ENCODE measurements at regions of chr17 and their contacts with region 1.

Region 1: DNA sequence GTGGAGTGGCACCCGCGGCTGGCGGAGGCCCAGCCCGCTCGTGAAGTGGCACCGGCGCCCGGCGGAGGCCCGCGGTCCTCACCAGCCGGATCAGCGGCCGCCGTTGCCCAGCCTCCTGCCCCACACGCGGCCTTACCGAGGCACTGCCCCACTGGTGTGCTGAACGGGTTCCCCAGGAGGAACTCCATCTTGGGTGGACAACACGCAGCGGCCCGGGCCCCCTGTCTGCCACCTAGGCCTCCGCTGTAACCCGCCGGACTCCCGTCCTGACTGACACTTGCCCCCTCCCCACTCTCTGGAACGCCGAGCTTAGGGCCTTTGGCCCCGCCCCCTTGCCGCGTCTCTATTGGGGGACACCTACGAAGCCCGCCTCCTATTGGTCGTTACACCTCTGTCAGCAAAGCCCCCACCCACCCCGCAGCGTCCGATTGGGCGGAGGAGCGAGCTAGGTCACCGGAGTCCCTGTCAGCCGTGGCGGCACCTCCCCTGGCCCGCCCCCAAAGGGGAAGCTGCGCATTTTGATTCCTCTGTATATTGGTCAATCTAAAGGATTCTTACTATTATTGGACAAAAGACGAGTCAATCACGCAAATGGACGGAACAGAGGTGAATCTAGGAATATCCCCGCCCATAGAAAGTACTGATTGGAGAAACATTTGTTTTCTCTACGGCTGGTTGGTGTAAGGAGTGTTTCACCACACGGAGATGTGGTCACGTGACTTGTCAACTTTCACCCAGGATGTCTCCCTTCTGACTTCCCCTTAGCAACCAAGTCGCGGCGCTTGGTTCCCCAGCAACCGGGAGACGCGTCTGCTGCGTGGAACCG is at the starts of genes DRC3 and TOM1L2:
- DNase-seq: peak; percentile 100
- H3K4me3 Mint-ChIP-seq: peak within 1 kb of the TSS; percentile 90
- H3K27ac Mint-ChIP-seq: peak within 1 kb of the TSS; percentile 75
- H3K4me1 Mint-ChIP-seq: peaks cover 35% of the 10 kb centered on the region
- H3K27me3 Mint-ChIP-seq: no peaks in the 10 kb centered on the region
- total RNA-seq, gene DRC3: 0.40 to 0.64 TPM
- total RNA-seq, gene TOM1L2: 9.8 to 9.9 TPM

Region 2: DNA sequence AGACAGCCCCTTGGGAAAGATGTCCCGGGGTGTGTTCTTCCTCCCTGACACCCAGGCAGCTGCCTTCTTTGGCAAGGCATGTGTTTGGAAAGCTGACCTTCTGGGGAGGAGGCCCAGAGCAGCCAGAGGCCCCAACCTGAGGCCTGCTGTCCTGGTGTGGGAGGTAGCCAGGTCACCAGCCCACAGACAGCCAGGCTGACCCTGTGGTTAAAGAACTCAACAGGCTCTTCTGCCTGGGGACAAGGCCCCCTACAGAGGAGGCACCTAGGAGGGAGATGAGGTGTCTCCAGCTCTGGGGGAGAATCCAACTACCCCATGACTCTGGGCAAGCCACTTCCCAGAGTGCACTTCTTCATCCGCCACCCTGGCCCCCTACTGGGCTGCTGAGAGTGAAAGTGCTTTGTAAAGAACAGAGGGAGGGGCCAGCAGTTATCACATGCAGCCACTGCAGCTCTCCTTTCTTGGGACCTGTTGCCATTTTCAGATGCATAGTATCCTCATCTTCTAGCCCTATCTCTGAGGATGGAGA is 122.4 kb before region 1 on chr17:
- CTCF ChIA-PET with region 1: no interaction called
- intact Hi-C with region 1: loop called (anchors 1 kb)
- DNase-seq: peak; percentile 94
- H3K4me3 Mint-ChIP-seq: peak overlapping the region; percentile 41
- H3K27ac Mint-ChIP-seq: peak overlapping the region; percentile 95
- H3K4me1 Mint-ChIP-seq: peaks cover 78% of the 10 kb centered on the region
- H3K27me3 Mint-ChIP-seq: no peaks in the 10 kb centered on the region

Region 3: GRCh38 chr17:17890773-17891759 is 81.3 kb before region 1 on chr17:
- CTCF ChIA-PET with region 1: no interaction called
- intact Hi-C with region 1: loop called (anchors 2 kb)
- DNase-seq: peak; percentile 75
- H3K4me3 Mint-ChIP-seq: no peak overlapping the region
- H3K27ac Mint-ChIP-seq: no peak overlapping the region
- H3K4me1 Mint-ChIP-seq: peaks cover 2% of the 10 kb centered on the region
- H3K27me3 Mint-ChIP-seq: no peaks in the 10 kb centered on the region

Region 4: DNA sequence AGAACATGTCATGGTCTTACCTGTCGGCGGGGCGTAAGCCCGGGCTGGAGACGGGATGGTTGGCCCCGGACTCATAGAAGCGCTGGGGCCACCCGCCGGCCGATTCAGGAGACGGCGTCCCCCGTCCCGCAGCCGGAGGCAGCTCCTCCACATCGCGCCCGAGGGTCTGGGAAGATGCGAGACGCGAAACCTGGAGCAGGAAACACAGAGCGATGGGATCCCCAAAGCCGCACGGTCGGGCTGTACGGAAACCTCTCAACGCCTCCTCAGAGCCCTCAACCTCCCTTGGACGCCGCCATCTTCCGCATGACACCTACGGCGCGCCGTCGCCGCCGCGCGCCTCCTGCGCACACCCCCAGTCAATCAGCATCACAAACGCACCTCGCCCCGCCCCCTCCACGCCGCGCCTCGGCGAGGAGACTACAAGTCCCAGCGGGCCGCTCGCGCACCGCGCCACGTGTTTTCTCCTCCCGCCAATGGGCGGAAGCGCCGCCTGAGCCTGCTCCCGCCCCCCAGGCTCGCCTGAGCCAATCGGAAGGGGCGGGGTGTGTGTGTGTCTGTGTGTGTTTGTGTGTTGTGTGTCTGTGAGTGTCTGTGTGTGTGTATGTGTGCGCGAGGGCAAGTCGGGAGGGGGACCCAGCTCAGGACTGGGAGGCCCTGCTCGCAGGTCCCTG is 66.7 kb after region 1 on chr17 and contains the starts of genes ATPAF2 and GID4:
- CTCF ChIA-PET with region 1: no interaction called
- intact Hi-C with region 1: loop called (anchors 1 kb)
- DNase-seq: peak; percentile 100
- H3K4me3 Mint-ChIP-seq: peak within 1 kb of the TSS; percentile 86
- H3K27ac Mint-ChIP-seq: peak within 1 kb of the TSS; percentile 79
- H3K4me1 Mint-ChIP-seq: peaks cover 40% of the 10 kb centered on the region
- H3K27me3 Mint-ChIP-seq: no peaks in the 10 kb centered on the region
- total RNA-seq, gene ATPAF2: 24.7 to 25.7 TPM
- total RNA-seq, gene GID4: 5.2 to 6.0 TPM